Activated CD4-positive, alpha-beta T cell treated with anti-CD3 and anti-CD28 coated beads for 36 hours (primary cell): ENCODE measurements at regions of chr4 and their contacts with region 1.

Region 1: DNA sequence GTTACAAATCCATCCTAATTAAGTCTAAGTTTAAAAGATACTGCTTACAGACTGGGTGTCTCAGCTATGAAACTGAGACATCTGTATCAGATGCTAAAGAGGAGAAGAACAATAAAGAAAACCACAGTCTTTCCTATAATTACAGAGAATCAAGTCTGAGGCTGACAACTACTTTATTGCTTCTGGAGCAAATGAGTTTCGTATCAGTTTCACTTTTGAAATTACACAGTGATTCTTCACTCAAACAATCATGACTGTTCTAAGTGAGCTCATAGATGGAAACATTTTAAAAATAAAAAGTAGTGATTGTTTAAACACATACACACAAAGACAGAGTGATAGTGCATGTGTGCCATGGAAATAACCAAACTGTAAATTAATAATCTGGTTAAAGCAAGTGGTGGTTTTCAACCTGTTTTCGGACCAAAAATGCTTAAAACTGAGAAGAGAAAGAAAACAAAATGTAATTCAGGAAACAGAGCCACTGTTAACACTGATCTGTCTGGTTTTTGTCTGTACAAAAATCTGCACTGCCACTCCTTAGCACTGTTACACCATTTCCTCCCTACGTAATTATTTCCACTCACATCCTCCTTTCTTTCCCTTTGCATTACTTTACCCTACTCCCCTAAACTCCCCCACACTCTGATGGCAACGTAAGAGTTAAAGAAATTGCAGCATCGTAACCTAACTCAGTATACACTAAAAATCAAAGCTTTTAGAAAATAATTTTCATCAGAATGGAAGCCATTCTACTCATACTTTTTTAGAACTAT is 12.5 kb downstream of the RFC1 start:
- DNase-seq: peak; percentile 47
- ATAC-seq: peak; percentile 85
- H3K4me3 Mint-ChIP-seq: peak overlapping the region; percentile 70
- H3K27ac Mint-ChIP-seq: peak overlapping the region; percentile 94
- H3K4me1 Mint-ChIP-seq: peaks cover 79% of the 10 kb centered on the region
- H3K27me3 Mint-ChIP-seq: no peaks in the 10 kb centered on the region

Region 2: GRCh38 chr4:38889143-38889542 is 464.5 kb before region 1 on chr4:
- CTCF ChIA-PET with region 1: no interaction called
- POLR2A ChIA-PET with region 1: no interaction called
- intact Hi-C with region 1: loop called in 1 of 2 experiments (anchors 1 kb)
- DNase-seq: no peak
- ATAC-seq: peak; percentile 78
- H3K4me3 Mint-ChIP-seq: peak overlapping the region; percentile 52
- H3K27ac Mint-ChIP-seq: peak overlapping the region; percentile 88
- H3K4me1 Mint-ChIP-seq: peaks cover 18% of the 10 kb centered on the region
- H3K27me3 Mint-ChIP-seq: no peaks in the 10 kb centered on the region

Region 3: DNA sequence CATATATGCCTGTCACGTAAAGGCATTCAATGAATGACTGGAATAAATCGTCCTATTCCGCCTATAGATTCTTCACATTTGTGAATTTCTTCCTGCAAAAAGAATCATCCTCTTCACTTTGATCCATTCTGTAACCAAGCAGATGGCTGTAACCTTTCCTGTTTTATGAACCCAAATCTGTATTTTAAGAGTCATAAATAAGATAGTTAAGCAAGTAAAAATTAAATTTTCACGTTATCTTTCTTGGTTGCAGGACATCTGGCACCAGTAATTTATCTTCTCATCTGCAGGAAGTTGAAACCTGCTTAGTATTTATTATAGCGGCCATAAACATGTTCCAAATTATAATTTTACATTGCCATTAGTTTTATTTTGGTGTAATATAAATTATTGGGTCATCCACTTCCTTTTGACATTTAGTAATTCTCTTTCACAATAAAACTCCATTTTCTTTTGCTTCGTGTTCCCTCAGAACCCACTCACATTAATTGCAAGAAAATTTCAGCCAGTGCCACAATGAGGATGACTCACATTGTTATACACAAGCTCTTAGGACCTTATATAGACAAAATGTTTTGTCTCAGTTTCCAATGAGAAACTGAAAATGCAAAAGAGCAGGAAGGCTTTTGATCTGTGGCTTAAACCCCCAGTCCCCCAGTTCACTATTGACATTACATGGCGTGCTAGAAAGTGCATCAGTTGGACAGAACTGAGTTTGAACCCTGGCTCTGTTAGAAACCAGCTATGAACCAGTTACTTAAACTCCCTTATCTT is 372.6 kb before region 1 on chr4:
- CTCF ChIA-PET with region 1: interaction called, 3 read pairs
- POLR2A ChIA-PET with region 1: interaction called, 5 read pairs
- intact Hi-C with region 1: loop called in 1 of 2 experiments (anchors 5 kb)
- DNase-seq: peak; percentile 30
- ATAC-seq: peak; percentile 81
- H3K4me3 Mint-ChIP-seq: peak overlapping the region; percentile 23
- H3K27ac Mint-ChIP-seq: peak overlapping the region; percentile 84
- H3K4me1 Mint-ChIP-seq: peaks cover 62% of the 10 kb centered on the region
- H3K27me3 Mint-ChIP-seq: no peaks in the 10 kb centered on the region

Region 4: GRCh38 chr4:39044364-39044955 is 309.2 kb before region 1 on chr4:
- CTCF ChIA-PET with region 1: no interaction called
- POLR2A ChIA-PET with region 1: interaction called, 3 read pairs
- intact Hi-C with region 1: loop called (anchors 1 to 10 kb)
- DNase-seq: peak; percentile 99
- ATAC-seq: peak; percentile 87
- H3K4me3 Mint-ChIP-seq: peak overlapping the region; percentile 76
- H3K27ac Mint-ChIP-seq: peak overlapping the region; percentile 69
- H3K4me1 Mint-ChIP-seq: peaks cover 48% of the 10 kb centered on the region
- H3K27me3 Mint-ChIP-seq: no peaks in the 10 kb centered on the region

Region 5: GRCh38 chr4:39341075-39341725 is 12.5 kb before region 1 on chr4:
- CTCF ChIA-PET with region 1: interaction called, 3 read pairs
- POLR2A ChIA-PET with region 1: interaction called, 10 read pairs
- intact Hi-C with region 1: no loop called
- DNase-seq: no peak
- ATAC-seq: peak; percentile 26
- H3K4me3 Mint-ChIP-seq: no peak overlapping the region
- H3K27ac Mint-ChIP-seq: no peak overlapping the region
- H3K4me1 Mint-ChIP-seq: peaks cover 45% of the 10 kb centered on the region
- H3K27me3 Mint-ChIP-seq: no peaks in the 10 kb centered on the region

Region 6: GRCh38 chr4:40672536-40673526 is 1319.2 kb after region 1 on chr4:
- CTCF ChIA-PET with region 1: no interaction called
- POLR2A ChIA-PET with region 1: no interaction called
- intact Hi-C with region 1: loop called in 1 of 2 experiments (anchors 10 kb)
- DNase-seq: peak; percentile 70
- ATAC-seq: peak; percentile 87
- H3K4me3 Mint-ChIP-seq: peak overlapping the region; percentile 57
- H3K27ac Mint-ChIP-seq: peak overlapping the region; percentile 93
- H3K4me1 Mint-ChIP-seq: peaks cover 63% of the 10 kb centered on the region
- H3K27me3 Mint-ChIP-seq: no peaks in the 10 kb centered on the region